H1 (cell line): ENCODE measurements at regions of chr1 and their contacts with region 1.

Region 1: GRCh38 chr1:31248293-31248692 is 8.6 kb upstream of the NKAIN1 start:
- DNase-seq: no peak
- H3K4me3 ChIP-seq: no peak overlapping the region
- H3K27ac ChIP-seq: no peak overlapping the region
- H3K4me1 ChIP-seq: no peaks in the 10 kb centered on the region
- H3K27me3 ChIP-seq: no peaks in the 10 kb centered on the region
- CTCF ChIP-seq: no peak
- EP300 ChIP-seq: no peak
- POLR2A ChIP-seq: no peak
- RAD21 ChIP-seq: no peak

Region 2: GRCh38 chr1:30684881-30685795 is 563.2 kb before region 1 on chr1:
- CTCF ChIA-PET with region 1: no interaction called
- POLR2A ChIA-PET with region 1: no interaction called
- DNase-seq: peak; percentile 90 to 97
- H3K4me3 ChIP-seq: peak overlapping the region; percentile 19 to 58 (median 34); a peak in 7 of 8 replicates
- H3K27ac ChIP-seq: peak overlapping the region; percentile 69; the same call in 1 of the 2 replicates
- H3K4me1 ChIP-seq: peaks cover 0 to 14% (median 7%) of the 10 kb centered on the region in 4 experiments; a peak in 6 of 7 replicates
- H3K27me3 ChIP-seq: peaks cover 0 to 4% (median 3%) of the 10 kb centered on the region in 4 experiments; a peak in 3 of 7 replicates
- CTCF ChIP-seq: peak; percentile 40 to 51 (median 49); a peak in 3 of 4 replicates
- EP300 ChIP-seq: no peak
- POLR2A ChIP-seq: peak in 1 of 2 experiments; percentile 77; a peak in 1 of 3 replicates
- RAD21 ChIP-seq: peak; percentile 45 to 48; a peak in 3 of 4 replicates

Region 3: DNA sequence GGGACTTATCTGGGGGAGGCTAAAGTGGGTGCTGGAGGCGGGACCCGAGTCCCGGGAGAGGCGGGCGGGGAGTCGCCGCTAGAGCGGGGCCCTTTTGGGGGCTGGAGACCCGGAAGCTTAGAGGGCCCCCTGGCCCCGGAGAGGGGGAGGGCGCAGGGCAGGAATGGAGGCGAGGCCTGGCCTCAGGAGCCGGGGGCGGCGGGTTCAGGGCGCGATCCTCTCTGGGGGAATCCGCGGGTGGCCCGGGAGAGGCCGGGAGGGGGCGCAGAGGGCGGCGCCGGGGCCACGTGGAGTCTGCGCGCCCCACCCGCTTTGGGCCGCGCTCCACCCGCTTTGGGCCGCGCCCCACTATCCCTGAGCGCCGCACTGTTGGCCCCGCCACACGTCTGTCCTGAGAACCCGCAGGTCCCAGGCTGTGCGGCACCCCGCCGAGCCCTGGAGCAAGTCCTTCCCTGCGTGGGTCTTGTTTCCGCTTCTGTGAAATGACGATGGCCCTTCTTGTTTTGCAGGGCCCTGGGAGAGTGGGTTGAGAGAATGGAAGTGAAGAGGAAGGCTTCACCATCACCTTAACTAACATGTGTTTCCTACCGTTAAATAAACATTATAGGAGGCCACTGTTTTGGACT is 93.0 kb before region 1 on chr1:
- CTCF ChIA-PET with region 1: no interaction called
- POLR2A ChIA-PET with region 1: no interaction called
- DNase-seq: peak; percentile 31 to 90
- H3K4me3 ChIP-seq: peak overlapping the region; percentile 49 to 66 (median 57)
- H3K27ac ChIP-seq: peak overlapping the region; percentile 60; the same call in 1 of the 2 replicates
- H3K4me1 ChIP-seq: peaks cover 0 to 3% (median 1%) of the 10 kb centered on the region in 4 experiments; a peak in 4 of 7 replicates
- H3K27me3 ChIP-seq: no peaks in the 10 kb centered on the region
- CTCF ChIP-seq: peak in 1 of 3 experiments; percentile 6; a peak in 1 of 4 replicates
- EP300 ChIP-seq: no peak
- POLR2A ChIP-seq: peak in 1 of 2 experiments; percentile 66; a peak in 2 of 3 replicates
- RAD21 ChIP-seq: 0 out of 4 replicates have a peak, but pooled peaks of 1 of the 2 experiments have one; percentile 8

Region 4: GRCh38 chr1:31259746-31260145 is 11.5 kb after region 1 on chr1:
- CTCF ChIA-PET with region 1: interaction called, 4 read pairs
- POLR2A ChIA-PET with region 1: interaction called, 12 read pairs
- DNase-seq: no peak
- H3K4me3 ChIP-seq: no peak overlapping the region
- H3K27ac ChIP-seq: no peak overlapping the region
- H3K4me1 ChIP-seq: no peaks in the 10 kb centered on the region
- H3K27me3 ChIP-seq: no peaks in the 10 kb centered on the region
- CTCF ChIP-seq: no peak
- EP300 ChIP-seq: no peak
- POLR2A ChIP-seq: no peak
- RAD21 ChIP-seq: no peak